Activated CD4-positive, alpha-beta memory T cell treated with anti-CD3 and anti-CD28 coated beads for 36 hours (primary cell): ENCODE measurements at regions of chr11 and their contacts with region 1.

Region 1: GRCh38 chr11:4187055-4187988 is 92.7 kb downstream of the RRM1 start:
- DNase-seq: peak; percentile 90
- H3K4me3 Mint-ChIP-seq: peak overlapping the region; percentile 73
- H3K27ac Mint-ChIP-seq: no peak overlapping the region
- H3K4me1 Mint-ChIP-seq: peaks cover 2% of the 10 kb centered on the region
- H3K27me3 Mint-ChIP-seq: peaks cover 3% of the 10 kb centered on the region

Region 2: DNA sequence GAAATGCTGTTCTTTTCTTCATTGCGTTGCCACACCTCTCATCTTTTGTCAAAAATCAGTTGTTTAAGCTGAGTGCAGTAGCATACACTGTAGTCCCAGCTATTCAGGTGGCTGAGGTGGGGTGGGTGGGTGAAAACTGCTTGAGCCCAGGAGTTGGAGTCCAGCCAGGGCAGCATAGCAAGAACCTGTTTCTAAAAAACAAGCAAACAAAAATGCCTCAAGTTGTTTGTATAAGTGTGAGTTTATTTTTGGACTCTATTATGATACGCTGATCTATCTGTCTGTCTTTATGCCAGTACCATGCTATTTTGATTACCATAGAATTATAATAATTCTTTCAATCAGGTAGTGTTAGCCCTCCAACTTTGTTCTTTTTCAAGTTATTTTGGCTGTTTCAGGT is 155.2 kb before region 1 on chr11:
- CTCF ChIA-PET with region 1: no interaction called
- POLR2A ChIA-PET with region 1: no interaction called
- intact Hi-C with region 1: no loop called
- DNase-seq: no peak
- H3K4me3 Mint-ChIP-seq: no peak overlapping the region
- H3K27ac Mint-ChIP-seq: no peak overlapping the region
- H3K4me1 Mint-ChIP-seq: peaks cover 16% of the 10 kb centered on the region
- H3K27me3 Mint-ChIP-seq: no peaks in the 10 kb centered on the region

Region 3: DNA sequence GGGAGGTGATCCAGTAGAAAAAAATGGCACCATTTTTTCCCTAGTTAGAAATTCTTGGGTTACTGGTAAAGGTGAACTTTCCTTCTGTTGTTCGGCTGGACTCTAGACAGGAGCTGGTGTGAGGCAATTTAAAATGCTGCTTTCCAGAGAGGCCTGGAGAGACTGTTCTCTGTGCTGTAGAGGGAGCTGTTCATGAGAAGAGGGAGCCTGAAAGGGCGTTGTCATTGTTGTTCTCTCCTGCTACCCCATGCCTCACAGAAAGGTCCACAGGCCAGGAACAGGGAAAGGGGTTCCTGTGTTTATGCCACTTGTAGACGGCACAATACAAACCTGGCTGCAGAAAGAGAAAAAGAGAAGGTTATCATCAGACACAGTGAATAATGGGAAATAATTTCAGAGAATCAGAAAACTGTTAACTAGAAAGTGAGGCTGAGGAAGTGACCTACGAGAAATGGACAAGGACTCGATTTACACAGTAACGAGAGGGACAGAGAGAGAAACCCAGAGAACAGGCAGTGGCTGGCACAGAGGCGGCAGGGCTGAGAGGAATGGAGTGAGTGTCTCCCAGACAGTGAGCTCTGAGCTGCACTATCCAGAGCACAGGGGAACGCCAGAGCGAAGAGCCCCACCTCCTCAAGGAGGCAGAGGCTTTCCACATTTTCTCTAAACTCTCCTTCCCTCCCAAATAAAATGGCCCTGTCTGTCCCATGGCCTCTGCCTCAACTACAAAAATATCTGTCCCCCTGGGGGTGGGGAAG is 16.5 kb after region 1 on chr11:
- CTCF ChIA-PET with region 1: interaction called, 22 read pairs
- POLR2A ChIA-PET with region 1: no interaction called
- intact Hi-C with region 1: no loop called
- DNase-seq: no peak
- H3K4me3 Mint-ChIP-seq: no peak overlapping the region
- H3K27ac Mint-ChIP-seq: no peak overlapping the region
- H3K4me1 Mint-ChIP-seq: no peaks in the 10 kb centered on the region
- H3K27me3 Mint-ChIP-seq: peaks cover 13% of the 10 kb centered on the region

Region 4: DNA sequence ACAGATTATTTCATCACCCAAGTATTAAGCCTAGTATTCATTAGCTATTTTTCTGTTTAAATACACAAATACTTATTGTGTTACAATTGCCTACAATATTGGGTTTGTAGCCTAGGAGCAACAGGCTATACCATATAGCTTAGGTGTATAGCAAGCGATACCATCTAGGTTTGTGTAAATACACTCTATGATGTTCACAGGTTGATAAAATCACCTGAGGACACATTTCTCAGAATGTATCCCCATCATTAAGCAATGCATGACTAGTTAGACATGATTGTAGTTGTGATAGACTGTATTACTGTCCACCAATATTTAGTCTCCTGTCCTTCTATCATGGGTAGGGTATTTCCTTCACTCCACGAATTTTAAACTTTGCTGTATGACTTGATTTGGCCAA is 303.5 kb after region 1 on chr11:
- CTCF ChIA-PET with region 1: interaction called, 83 read pairs
- POLR2A ChIA-PET with region 1: no interaction called
- intact Hi-C with region 1: loop called (anchors 1 kb)
- DNase-seq: no peak
- H3K4me3 Mint-ChIP-seq: no peak overlapping the region
- H3K27ac Mint-ChIP-seq: no peak overlapping the region
- H3K4me1 Mint-ChIP-seq: peaks cover 6% of the 10 kb centered on the region
- H3K27me3 Mint-ChIP-seq: peaks cover 19% of the 10 kb centered on the region

Region 5: GRCh38 chr11:4539603-4540219 is 352.4 kb after region 1 on chr11:
- CTCF ChIA-PET with region 1: interaction called, 177 read pairs
- POLR2A ChIA-PET with region 1: no interaction called
- intact Hi-C with region 1: loop called (anchors 1 kb)
- DNase-seq: peak; percentile 70
- H3K4me3 Mint-ChIP-seq: no peak overlapping the region
- H3K27ac Mint-ChIP-seq: no peak overlapping the region
- H3K4me1 Mint-ChIP-seq: no peaks in the 10 kb centered on the region
- H3K27me3 Mint-ChIP-seq: no peaks in the 10 kb centered on the region

Region 6: GRCh38 chr11:4607781-4608666 is 420.7 kb after region 1 on chr11 and contains the start of gene TRIM68:
- CTCF ChIA-PET with region 1: interaction called, 6 read pairs
- POLR2A ChIA-PET with region 1: no interaction called
- intact Hi-C with region 1: loop called (anchors 5 kb)
- DNase-seq: peak; percentile 97
- H3K4me3 Mint-ChIP-seq: peak within 1 kb of the TSS; percentile 93
- H3K27ac Mint-ChIP-seq: peak within 1 kb of the TSS; percentile 87
- H3K4me1 Mint-ChIP-seq: peaks cover 34% of the 10 kb centered on the region
- H3K27me3 Mint-ChIP-seq: no peaks in the 10 kb centered on the region
- total RNA-seq, gene TRIM68: 8.7 to 9.2 TPM

Region 7: DNA sequence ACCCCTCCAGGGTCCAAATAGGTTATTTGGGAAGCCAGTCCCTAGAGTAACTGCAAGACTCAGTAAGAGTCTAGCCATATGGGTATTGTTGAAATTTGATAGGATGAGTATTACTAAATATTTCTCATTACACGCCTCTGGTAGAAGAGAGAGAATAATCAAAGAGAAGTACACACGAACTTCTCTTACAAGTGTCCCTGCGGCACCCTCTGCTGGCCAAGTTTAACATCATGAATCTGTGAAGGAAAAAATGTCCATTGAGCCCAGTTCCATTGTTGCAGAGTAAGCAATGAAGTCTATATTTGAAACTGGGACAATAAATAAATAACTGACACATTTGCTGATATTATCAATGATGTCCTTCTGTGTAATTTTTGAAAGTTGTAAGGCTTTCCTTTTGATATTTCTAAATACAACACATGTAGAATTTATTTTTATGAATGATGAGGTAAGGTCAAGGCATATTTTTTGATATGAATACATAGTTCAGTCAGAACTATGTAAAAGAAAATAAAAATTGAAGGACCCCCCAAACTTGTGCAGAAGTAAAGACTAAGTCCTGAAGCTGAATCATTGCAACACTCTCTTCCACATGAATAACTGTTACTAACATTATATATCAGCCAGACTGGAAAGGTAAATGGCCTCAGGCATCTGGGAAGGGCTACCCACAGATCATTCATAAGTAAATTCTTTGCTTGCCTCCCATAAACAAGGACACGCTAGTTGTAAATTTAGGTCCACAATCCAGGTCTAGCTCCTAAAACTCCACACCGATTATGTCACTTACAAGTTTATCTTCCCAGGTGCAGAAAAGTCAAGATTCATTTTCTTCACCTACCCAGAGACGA is 817.3 kb after region 1 on chr11:
- CTCF ChIA-PET with region 1: no interaction called
- POLR2A ChIA-PET with region 1: no interaction called
- intact Hi-C with region 1: loop called (anchors 5 kb)
- DNase-seq: peak; percentile 38
- H3K4me3 Mint-ChIP-seq: no peak overlapping the region
- H3K27ac Mint-ChIP-seq: no peak overlapping the region
- H3K4me1 Mint-ChIP-seq: no peaks in the 10 kb centered on the region
- H3K27me3 Mint-ChIP-seq: no peaks in the 10 kb centered on the region